SK-N-SH (cell line): ENCODE measurements at regions of chr17 and their contacts with region 1.

Region 1: GRCh38 chr17:31524926-31525800 is 133.7 kb downstream of the RAB11FIP4 start:
- DNase-seq: peak; percentile 91
- H3K4me3 ChIP-seq: no peak overlapping the region; a peak in 1 of 4 replicates
- H3K27ac ChIP-seq: 0 out of 4 replicates have a peak overlapping the region, but pooled peaks of 1 of the 2 experiments have one; percentile 18
- H3K4me1 ChIP-seq: peaks cover 3 to 12% of the 10 kb centered on the region in 2 experiments; a peak in 1 of 4 replicates
- H3K27me3 ChIP-seq: no peaks in the 10 kb centered on the region
- CTCF ChIP-seq: peak; percentile 89
- EP300 ChIP-seq: no peak
- RAD21 ChIP-seq: peak; percentile 93

Region 2: GRCh38 chr17:31216053-31216751 is 309.0 kb before region 1 on chr17:
- CTCF ChIA-PET with region 1: interaction called, 12 read pairs
- POLR2A ChIA-PET with region 1: no interaction called
- DNase-seq: peak; percentile 18
- H3K4me3 ChIP-seq: peak overlapping the region in 1 of 2 experiments; percentile 5; a peak in 1 of 4 replicates
- H3K27ac ChIP-seq: peak overlapping the region; percentile 22 to 52; a peak in 3 of 4 replicates
- H3K4me1 ChIP-seq: peaks cover 0 to 8% of the 10 kb centered on the region in 2 experiments; a peak in 1 of 4 replicates
- H3K27me3 ChIP-seq: no peaks in the 10 kb centered on the region
- CTCF ChIP-seq: peak; percentile 78
- EP300 ChIP-seq: no peak
- RAD21 ChIP-seq: peak; percentile 72

Region 3: DNA sequence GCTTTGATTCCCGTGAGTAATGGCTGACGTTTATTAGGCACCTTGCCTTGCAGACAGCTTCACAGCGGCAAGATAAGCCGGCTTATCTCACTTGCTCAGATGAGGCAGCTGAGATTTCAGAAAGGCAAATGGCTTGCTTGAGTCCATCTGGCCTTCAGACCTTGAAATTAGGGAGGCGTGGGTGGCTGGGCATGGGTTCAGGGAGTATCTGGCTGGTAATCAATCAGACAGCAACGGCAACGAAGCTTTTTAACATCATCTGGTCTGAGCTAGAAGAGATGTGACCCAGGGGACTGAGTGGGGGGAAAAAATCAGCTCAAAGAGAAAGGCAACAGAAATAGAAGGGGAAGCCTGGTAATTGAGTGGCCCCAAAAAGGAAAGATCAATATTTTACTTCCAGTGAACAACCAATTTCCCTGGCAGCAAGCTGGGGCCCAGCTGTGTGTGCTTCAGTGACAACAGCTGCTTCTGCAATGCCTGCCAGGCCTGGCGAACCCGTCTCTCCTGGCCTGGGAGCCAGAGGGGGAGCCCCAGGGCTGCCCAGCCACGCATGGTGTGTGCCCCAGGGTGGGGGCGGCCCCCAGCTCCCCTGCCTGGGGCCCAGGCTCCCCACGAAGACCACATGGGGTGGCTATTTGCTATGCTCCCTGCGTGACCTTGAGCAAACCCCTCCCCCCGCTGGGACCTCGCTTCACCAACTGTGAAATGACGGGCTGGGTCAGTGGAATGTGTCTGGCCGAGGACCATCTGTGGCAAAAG is 99.7 kb before region 1 on chr17:
- CTCF ChIA-PET with region 1: interaction called, 10 read pairs
- POLR2A ChIA-PET with region 1: no interaction called
- DNase-seq: peak; percentile 83
- H3K4me3 ChIP-seq: no peak overlapping the region
- H3K27ac ChIP-seq: peak overlapping the region in 1 of 2 experiments; percentile 96; a peak in 2 of 4 replicates
- H3K4me1 ChIP-seq: peaks cover 0 to 28% of the 10 kb centered on the region in 2 experiments; a peak in 2 of 4 replicates
- H3K27me3 ChIP-seq: no peaks in the 10 kb centered on the region
- CTCF ChIP-seq: no peak
- EP300 ChIP-seq: peak in 1 of 2 experiments; percentile 96; a peak in 2 of 4 replicates
- RAD21 ChIP-seq: peak; percentile 30

Region 4: DNA sequence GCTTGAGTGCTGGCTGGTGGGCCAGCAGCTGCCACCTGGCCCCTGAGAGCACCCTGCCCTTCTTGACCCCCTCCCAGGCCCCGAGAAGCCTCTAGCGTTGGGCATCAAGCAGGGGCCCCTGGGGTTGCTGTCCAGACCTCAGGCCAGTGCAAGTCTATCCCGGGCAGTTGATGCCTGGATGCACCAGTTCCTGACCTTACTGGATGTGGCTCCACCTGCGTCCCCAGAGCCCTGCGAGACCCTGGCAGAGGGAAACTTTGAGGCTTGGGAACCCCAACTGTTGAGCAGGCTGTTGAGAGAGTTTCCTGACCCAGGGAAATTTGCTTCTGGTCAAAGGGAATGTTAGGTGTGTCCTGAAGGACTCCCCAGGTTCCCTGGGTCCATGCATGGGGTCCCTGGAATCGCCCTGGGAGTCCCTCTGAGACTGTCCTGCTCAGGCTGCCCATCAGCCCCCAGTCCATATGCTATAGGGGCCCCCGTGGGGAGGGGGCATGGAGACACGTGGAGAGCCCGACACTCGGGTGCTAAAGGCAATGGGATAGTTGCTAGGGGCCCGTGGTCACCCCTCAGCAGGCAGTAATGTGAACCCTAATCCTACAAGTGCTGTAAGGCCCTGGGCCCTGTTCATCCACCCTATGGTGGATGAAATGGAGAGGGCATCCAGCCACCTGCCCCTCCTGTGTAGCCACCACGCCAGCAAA is 87.3 kb before region 1 on chr17:
- CTCF ChIA-PET with region 1: interaction called, 61 read pairs
- POLR2A ChIA-PET with region 1: no interaction called
- DNase-seq: no peak
- H3K4me3 ChIP-seq: no peak overlapping the region
- H3K27ac ChIP-seq: no peak overlapping the region
- H3K4me1 ChIP-seq: no peaks in the 10 kb centered on the region; a peak in 1 of 4 replicates
- H3K27me3 ChIP-seq: no peaks in the 10 kb centered on the region
- CTCF ChIP-seq: no peak
- EP300 ChIP-seq: no peak
- RAD21 ChIP-seq: no peak

Region 5: GRCh38 chr17:31487648-31488263 is 37.4 kb before region 1 on chr17:
- CTCF ChIA-PET with region 1: interaction called, 11 read pairs
- POLR2A ChIA-PET with region 1: no interaction called
- DNase-seq: peak; percentile 97
- H3K4me3 ChIP-seq: peak overlapping the region; percentile 59 to 61
- H3K27ac ChIP-seq: no peak overlapping the region
- H3K4me1 ChIP-seq: peaks cover 0 to 25% of the 10 kb centered on the region in 2 experiments; a peak in 1 of 4 replicates
- H3K27me3 ChIP-seq: peaks cover 5% of the 10 kb centered on the region; the same call in 1 of the 2 replicates
- CTCF ChIP-seq: no peak
- EP300 ChIP-seq: no peak
- RAD21 ChIP-seq: no peak

Region 6: DNA sequence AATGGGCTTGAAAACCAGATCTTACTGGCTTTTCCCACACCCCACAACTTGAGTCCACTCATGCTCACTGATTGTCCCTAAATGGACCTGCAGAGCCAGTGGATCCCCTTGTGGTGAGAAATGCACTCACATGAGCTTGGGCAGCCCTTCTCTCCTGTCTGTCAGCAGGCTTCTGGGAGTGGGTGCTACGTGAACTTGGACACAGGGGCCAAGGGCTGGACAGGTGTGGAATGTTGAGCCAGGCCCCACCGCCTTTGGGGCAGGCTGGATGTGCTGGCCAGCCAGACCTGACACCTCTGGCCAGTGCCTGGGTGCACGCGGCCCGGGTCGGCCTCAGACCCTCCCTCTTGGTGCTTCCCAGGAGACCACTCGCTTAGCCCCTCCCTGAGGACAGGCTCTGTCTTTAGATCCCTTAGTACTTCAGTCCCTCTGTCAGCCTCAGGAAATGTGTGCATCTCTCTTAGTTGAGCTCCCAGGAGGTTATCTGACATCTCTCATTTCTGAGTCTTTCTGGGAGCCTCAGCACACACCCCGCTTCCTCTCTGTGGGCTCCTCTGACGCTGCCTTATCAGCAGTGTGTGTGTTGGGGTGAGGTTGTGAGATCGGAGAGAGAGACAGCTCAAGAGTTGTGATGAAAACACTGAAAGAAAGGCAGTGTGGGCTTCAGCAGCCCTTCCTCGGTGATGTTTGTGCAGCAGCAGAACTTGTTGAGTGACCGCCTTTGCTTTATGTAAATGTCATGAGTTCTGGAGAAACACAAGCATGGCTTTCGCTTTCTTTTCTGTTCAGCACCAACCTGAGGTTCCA is 16.7 kb before region 1 on chr17:
- CTCF ChIA-PET with region 1: interaction called, 24 read pairs
- POLR2A ChIA-PET with region 1: interaction called, 6 read pairs
- DNase-seq: no peak
- H3K4me3 ChIP-seq: no peak overlapping the region
- H3K27ac ChIP-seq: peak overlapping the region in 1 of 2 experiments; percentile 31; a peak in 1 of 4 replicates
- H3K4me1 ChIP-seq: peaks cover 0 to 35% of the 10 kb centered on the region in 2 experiments; a peak in 1 of 4 replicates
- H3K27me3 ChIP-seq: no peaks in the 10 kb centered on the region
- CTCF ChIP-seq: 0 out of 2 replicates have a peak, but pooled peaks have one; percentile 16
- EP300 ChIP-seq: no peak
- RAD21 ChIP-seq: peak; percentile 28